H1 (cell line): ENCODE measurements at regions of chr11 and their contacts with region 1.

Region 1: GRCh38 chr11:119381181-119381988 is at the start of gene USP2:
- DNase-seq: peak in 1 of 2 experiments; percentile 99
- H3K4me3 ChIP-seq: peak within 1 kb of the TSS; percentile 62 to 81 (median 66)
- H3K27ac ChIP-seq: peak within 1 kb of the TSS; percentile 53; the same call in 1 of the 2 replicates
- H3K4me1 ChIP-seq: peaks cover 9 to 35% (median 30%) of the 10 kb centered on the region in 4 experiments
- H3K27me3 ChIP-seq: peaks cover 0 to 12% (median 10%) of the 10 kb centered on the region in 4 experiments; a peak in 6 of 7 replicates
- CTCF ChIP-seq: peak; percentile 76 to 81 (median 79)
- EP300 ChIP-seq: no peak
- POLR2A ChIP-seq: peak in 1 of 2 experiments; percentile 18; a peak in 1 of 3 replicates
- RAD21 ChIP-seq: peak; percentile 51 to 62
- total RNA-seq, gene USP2: 6.9 and 8.5 TPM in 2 replicates

Region 2: DNA sequence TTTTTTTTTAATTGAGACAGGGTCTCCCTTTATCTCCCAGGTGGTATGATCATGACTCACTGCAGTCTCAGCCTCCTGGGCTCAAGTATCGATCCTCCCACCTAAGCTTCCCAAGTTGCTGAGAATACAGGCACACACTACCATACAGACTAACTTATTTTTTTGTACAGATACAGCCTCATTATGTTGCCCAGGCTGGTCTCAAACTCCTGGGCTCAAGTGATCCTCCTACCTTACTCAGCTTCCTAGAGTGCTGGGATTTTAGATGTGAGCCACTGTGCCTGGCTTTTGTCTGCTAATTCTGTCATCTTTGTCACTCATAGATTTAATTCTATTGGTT is 131.7 kb before region 1 on chr11:
- CTCF ChIA-PET with region 1: no interaction called
- POLR2A ChIA-PET with region 1: no interaction called
- DNase-seq: no peak
- H3K4me3 ChIP-seq: no peak overlapping the region
- H3K27ac ChIP-seq: no peak overlapping the region
- H3K4me1 ChIP-seq: no peaks in the 10 kb centered on the region
- H3K27me3 ChIP-seq: no peaks in the 10 kb centered on the region
- CTCF ChIP-seq: no peak
- EP300 ChIP-seq: no peak
- POLR2A ChIP-seq: no peak
- RAD21 ChIP-seq: no peak

Region 3: DNA sequence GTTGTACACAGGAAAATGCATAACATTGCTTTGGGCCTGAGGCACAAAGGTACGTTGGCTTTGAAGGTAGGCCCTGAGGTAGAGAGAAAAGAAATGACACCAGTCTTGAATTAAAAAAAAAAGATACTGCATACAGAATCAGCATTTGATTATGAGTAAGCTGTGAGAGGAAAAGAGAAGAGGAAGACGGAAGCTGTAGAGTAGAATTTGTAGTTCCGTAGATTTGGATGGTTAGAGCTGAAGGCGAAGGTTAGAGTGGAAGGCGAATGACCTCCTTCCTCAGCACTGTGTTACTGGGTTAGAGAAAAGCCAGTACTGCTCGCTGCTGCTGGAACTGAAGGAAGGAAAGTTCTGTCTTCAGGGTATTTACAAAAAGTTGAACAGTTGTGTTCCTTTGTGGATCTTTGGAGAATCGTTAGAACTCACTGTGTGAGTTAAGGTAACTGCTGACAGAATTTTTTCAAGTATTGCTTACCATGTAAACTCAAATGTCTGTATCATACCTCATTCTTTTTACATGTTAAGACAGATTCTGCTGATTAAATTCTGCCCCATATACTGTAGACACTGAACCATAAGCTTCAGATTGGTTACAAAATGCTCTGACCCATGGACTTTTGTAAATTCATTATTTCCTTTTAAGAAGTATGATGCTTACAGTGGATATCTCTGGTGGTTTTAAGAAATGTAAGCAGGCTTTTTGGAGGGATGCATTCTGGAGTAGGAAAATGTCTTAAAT is 114.7 kb before region 1 on chr11:
- CTCF ChIA-PET with region 1: no interaction called
- POLR2A ChIA-PET with region 1: no interaction called
- DNase-seq: no peak
- H3K4me3 ChIP-seq: no peak overlapping the region
- H3K27ac ChIP-seq: no peak overlapping the region
- H3K4me1 ChIP-seq: peaks cover 0 to 3% (median 0%) of the 10 kb centered on the region in 4 experiments; a peak in 1 of 7 replicates
- H3K27me3 ChIP-seq: no peaks in the 10 kb centered on the region
- CTCF ChIP-seq: no peak
- EP300 ChIP-seq: no peak
- POLR2A ChIP-seq: no peak
- RAD21 ChIP-seq: no peak

Region 4: DNA sequence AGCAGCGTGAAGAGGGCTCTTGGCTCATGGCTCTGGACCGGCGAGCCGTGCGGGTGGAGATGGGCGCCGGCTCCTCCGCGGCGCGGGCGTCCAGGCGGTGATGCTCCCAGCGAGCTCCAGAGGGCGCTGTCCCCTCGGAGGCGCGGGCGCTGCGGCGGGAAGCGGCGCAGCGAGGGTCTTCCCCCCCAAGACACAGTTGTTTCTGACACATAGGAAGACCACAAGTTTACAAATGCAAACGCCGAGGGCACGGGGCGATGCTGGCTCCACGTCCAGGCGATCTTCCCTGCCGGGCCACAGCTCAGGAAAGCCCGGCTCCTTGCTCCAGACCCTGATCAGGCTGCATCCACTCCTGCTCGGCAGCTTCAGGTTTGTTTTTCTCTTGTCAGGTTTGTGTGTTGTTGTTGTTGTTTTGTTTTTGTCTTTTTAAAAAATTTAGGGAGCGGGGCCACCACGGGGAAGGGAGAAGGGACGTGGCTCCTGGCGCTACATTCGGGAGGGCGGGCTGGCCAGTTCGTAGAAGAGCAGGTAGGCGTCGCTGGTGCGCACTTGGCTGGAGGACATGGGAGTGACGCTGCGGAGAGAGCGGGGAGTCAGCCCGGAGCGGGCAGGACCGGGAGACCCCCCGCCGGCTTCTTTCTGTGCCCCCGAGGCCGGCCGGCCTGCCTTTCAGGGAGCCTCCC is 24.9 kb before region 1 on chr11:
- CTCF ChIA-PET with region 1: interaction called, 474 read pairs
- POLR2A ChIA-PET with region 1: interaction called, 8 read pairs
- DNase-seq: peak in 1 of 2 experiments; percentile 93
- H3K4me3 ChIP-seq: peak overlapping the region; percentile 26 to 80 (median 76); a peak in 7 of 8 replicates
- H3K27ac ChIP-seq: no peak overlapping the region
- H3K4me1 ChIP-seq: peaks cover 6 to 9% (median 8%) of the 10 kb centered on the region in 4 experiments
- H3K27me3 ChIP-seq: peaks cover 0 to 4% (median under 1%) of the 10 kb centered on the region in 4 experiments; a peak in 3 of 7 replicates
- CTCF ChIP-seq: peak; percentile 77 to 97 (median 93)
- EP300 ChIP-seq: peak in 1 of 2 experiments; percentile 90; a peak in 1 of 3 replicates
- POLR2A ChIP-seq: no peak
- RAD21 ChIP-seq: peak; percentile 74 to 85

Region 5: DNA sequence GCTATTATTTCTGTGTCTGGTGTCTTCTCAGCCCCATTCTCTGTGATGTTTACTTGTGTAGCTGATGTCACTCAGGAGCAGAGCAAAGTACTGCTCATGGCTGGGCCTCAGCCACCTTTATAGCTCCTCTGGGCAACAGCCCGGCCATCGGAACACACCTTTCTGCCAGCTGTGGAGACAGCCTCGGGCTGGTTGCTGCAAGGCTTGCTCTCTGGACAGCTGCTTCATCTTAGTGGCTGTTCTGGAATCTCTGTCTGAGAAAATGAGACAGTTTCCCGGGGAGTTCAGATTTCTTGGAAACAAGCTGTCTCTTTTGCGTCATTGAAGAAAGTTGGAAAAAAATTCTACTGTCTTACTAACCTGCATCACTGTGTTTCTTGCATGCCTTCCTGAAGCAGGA is 21.6 kb after region 1 on chr11:
- CTCF ChIA-PET with region 1: interaction called, 11 read pairs
- POLR2A ChIA-PET with region 1: interaction called, 4 read pairs
- DNase-seq: no peak
- H3K4me3 ChIP-seq: no peak overlapping the region
- H3K27ac ChIP-seq: no peak overlapping the region
- H3K4me1 ChIP-seq: no peaks in the 10 kb centered on the region
- H3K27me3 ChIP-seq: no peaks in the 10 kb centered on the region
- CTCF ChIP-seq: no peak
- EP300 ChIP-seq: no peak
- POLR2A ChIP-seq: no peak
- RAD21 ChIP-seq: no peak

Region 6: DNA sequence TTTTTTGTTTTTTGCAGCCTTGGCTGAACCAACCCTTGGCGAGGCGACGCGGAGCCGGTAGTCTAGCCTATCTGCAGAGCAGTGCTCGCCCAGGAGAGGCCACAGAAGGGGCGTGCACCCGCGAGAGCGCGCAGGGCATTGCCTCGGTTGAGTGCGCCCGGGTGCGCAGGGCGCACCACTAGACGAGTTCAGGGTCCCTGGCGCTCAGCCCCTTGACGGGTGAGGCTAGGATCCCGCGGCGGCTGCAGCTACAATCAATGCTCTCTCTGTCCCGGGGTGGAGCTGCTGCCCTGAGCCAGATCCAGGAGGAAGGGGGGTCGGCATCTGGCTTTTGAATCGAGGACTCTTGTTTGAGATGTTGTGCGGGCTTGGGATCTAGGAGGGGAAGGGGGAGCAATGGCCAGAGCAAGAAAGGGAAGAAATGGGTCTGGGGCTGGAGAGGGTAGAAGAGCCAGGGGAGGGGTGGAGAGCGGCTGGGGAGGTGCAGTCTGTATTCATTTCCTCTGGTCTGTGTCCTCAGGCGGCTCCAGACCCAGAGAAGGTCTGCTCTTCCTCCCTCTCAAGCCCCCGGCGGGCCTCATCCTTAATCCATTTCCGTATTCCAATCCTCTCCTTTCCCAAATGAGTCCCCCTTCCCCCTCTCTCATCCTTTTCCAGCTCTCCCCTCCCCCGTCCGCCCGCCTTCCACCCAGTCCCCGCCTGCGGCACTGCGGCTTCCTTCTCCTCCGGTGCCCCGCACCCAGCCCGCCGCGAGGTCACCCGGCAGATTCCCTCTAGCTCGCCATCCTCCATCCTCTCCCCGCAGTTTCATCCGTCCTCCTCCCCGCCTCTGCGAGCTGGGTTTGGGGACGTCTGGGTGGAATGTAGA is 40.8 kb after region 1 on chr11:
- CTCF ChIA-PET with region 1: interaction called, 9 read pairs
- POLR2A ChIA-PET with region 1: interaction called, 12 read pairs
- DNase-seq: no peak
- H3K4me3 ChIP-seq: peak overlapping the region; percentile 76 to 91 (median 90)
- H3K27ac ChIP-seq: peak overlapping the region; percentile 43
- H3K4me1 ChIP-seq: peaks cover 20 to 40% (median 27%) of the 10 kb centered on the region in 4 experiments
- H3K27me3 ChIP-seq: no peaks in the 10 kb centered on the region; a peak in 1 of 7 replicates
- CTCF ChIP-seq: no peak
- EP300 ChIP-seq: no peak
- POLR2A ChIP-seq: peak in 1 of 2 experiments; percentile 37; a peak in 1 of 3 replicates
- RAD21 ChIP-seq: no peak